GM12878 (cell line): ENCODE measurements at regions of chr20 and their contacts with region 1.

Region 1: DNA sequence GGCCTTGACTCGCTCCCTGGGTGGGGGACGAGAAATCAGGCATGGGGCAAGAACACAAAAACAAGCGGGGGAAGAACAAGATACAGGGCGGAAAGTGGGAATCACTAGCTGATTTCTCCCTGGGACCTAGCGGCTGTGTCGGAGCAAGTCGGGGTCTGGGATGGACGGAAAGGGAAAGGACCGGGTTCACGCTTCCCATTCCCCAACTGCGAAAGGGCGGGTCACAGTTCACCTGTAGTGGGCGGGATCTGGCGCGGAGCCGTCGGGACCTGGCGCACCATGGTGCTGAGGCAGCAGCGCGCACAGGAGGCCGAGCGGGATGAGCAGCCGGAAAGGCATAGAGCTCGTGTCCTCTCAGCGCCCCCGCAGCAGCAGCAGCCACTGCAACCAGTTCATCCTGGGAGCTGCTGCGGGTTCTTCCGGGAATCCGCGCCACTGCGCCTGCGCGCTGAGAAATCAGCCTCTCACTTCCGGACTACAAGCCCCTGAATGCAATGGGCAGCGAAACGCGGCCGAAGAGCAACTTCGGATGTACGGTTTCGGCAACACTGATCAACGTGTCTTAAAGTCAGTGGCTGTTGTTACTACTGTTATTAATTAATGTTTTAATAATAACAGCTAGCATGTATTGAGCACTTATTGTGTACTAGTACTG is at the start of gene EDEM2:
- DNase-seq: peak; percentile 88
- ATAC-seq: peak; percentile 91
- H3K4me3 ChIP-seq: peak within 1 kb of the TSS; percentile 88
- H3K27ac ChIP-seq: peak within 1 kb of the TSS; percentile 69
- H3K4me1 ChIP-seq: peaks cover 13% of the 10 kb centered on the region
- H3K27me3 ChIP-seq: no peaks in the 10 kb centered on the region
- CTCF ChIP-seq: no peak
- EP300 ChIP-seq: no peak
- POLR2A ChIP-seq: peak; percentile 91
- RAD21 ChIP-seq: no peak
- polyA plus RNA-seq, gene EDEM2: 9.9 to 11.4 TPM

Region 2: GRCh38 chr20:34834459-34834893 is 312.6 kb before region 1 on chr20:
- CTCF ChIA-PET with region 1: interaction called, 11 read pairs
- POLR2A ChIA-PET with region 1: no interaction called
- RAD21 ChIA-PET with region 1: interaction called, 5 read pairs
- SMC1A ChIA-PET with region 1: interaction called, 5 read pairs
- in situ Hi-C with region 1: no loop called
- intact Hi-C with region 1: no loop called
- DNase-seq: no peak
- ATAC-seq: peak; percentile 54
- H3K4me3 ChIP-seq: no peak overlapping the region
- H3K27ac ChIP-seq: no peak overlapping the region
- H3K4me1 ChIP-seq: no peaks in the 10 kb centered on the region
- H3K27me3 ChIP-seq: no peaks in the 10 kb centered on the region
- CTCF ChIP-seq: peak in 1 of 3 experiments; percentile 52; a peak in 2 of 6 replicates
- EP300 ChIP-seq: no peak
- POLR2A ChIP-seq: no peak
- RAD21 ChIP-seq: peak; percentile 46

Region 3: DNA sequence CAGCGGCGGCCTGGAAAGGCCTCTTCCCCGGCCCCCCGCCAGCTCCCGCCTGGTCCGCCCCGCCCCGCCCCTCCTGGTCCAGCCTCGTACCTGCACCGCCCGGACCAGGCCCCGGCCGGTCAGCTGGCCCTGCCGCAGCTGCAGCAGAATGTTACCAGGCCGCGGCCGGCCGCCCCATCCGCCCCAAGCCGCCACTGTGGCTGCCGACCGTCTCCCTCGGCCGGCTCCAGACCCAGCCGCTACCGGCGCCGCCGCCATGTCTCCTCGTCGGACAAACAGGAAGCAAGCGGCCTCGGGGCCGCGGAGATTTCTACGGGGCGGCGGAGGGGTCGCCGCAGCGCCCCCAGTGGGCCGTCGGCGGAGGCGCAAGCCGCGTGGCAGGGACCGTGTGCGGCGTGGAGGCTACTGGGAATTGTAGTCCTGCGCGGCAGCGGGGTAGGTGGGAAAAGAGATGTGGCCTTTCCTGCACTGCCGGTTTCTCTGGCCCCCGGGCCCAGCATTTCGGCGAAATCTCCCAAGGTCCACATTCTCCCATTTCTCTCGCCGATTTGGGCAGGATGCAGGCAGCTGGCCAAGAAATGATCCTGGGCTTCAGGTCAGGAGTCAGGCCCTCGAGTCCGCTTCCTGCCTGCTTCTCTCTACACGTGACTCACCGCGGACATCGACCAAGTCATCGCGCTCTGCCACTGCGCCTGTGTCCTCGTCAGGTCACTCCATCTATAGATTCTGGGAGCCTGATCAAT is 54.4 kb before region 1 on chr20 and contains the start of gene TRPC4AP:
- CTCF ChIA-PET with region 1: interaction called, 65 read pairs
- POLR2A ChIA-PET with region 1: interaction called, 3 read pairs
- RAD21 ChIA-PET with region 1: interaction called, 18 read pairs
- SMC1A ChIA-PET with region 1: interaction called, 13 read pairs
- in situ Hi-C with region 1: no loop called
- intact Hi-C with region 1: no loop called
- DNase-seq: peak; percentile 57
- ATAC-seq: peak; percentile 95
- H3K4me3 ChIP-seq: peak within 1 kb of the TSS; percentile 82
- H3K27ac ChIP-seq: peak within 1 kb of the TSS; percentile 69
- H3K4me1 ChIP-seq: peaks cover 15% of the 10 kb centered on the region
- H3K27me3 ChIP-seq: no peaks in the 10 kb centered on the region
- CTCF ChIP-seq: peak; percentile 90 to 99 (median 98); a peak in 5 of 6 replicates
- EP300 ChIP-seq: peak in 1 of 2 experiments; percentile 26; a peak in 1 of 4 replicates
- POLR2A ChIP-seq: peak; percentile 96
- RAD21 ChIP-seq: peak; percentile 64
- polyA plus RNA-seq, gene TRPC4AP: 1.1 to 2.2 TPM

Region 4: DNA sequence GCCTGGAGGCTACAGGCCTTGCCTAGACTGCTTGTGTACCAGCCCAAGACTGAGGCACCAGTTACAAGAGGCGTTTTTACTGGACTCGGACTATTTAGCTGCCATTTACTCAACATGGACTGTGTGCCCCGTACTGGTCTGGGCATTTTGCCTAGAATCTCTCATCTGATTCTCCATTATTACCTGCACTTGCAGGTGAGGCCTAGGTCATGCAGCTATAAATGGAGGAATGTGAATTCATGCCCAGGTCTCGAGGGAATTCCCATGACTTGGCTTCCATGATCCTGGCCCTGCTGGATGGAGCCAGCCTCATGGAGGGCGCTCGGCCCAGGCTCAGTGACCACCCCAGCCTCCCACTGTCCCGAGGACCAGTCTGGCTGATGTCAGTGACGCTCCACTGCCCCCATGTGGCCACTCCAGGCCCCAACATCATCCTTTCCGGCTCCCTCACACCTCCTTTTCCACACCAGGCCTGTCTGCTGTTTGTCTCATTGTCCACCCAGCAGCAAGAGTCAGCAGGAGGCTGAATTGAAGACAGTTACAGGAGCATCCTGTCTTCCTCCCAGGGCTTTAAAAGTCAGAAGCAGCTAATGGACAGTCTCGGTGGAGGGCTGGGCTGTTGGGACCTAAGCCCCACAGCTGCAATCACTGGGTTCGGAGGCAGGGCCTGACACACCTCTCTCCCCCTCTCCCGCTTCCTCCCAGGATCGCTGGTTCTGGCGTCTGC is 122.2 kb after region 1 on chr20:
- CTCF ChIA-PET with region 1: interaction called, 98 read pairs
- POLR2A ChIA-PET with region 1: no interaction called
- RAD21 ChIA-PET with region 1: interaction called, 14 read pairs
- SMC1A ChIA-PET with region 1: interaction called, 6 read pairs
- in situ Hi-C with region 1: loop called (anchors 5 kb)
- intact Hi-C with region 1: loop called (anchors 1 kb)
- DNase-seq: no peak
- ATAC-seq: peak; percentile 96
- H3K4me3 ChIP-seq: no peak overlapping the region
- H3K27ac ChIP-seq: no peak overlapping the region
- H3K4me1 ChIP-seq: no peaks in the 10 kb centered on the region
- H3K27me3 ChIP-seq: no peaks in the 10 kb centered on the region
- CTCF ChIP-seq: peak; percentile 78 to 83 (median 82)
- EP300 ChIP-seq: no peak
- POLR2A ChIP-seq: no peak
- RAD21 ChIP-seq: peak; percentile 76

Region 5: DNA sequence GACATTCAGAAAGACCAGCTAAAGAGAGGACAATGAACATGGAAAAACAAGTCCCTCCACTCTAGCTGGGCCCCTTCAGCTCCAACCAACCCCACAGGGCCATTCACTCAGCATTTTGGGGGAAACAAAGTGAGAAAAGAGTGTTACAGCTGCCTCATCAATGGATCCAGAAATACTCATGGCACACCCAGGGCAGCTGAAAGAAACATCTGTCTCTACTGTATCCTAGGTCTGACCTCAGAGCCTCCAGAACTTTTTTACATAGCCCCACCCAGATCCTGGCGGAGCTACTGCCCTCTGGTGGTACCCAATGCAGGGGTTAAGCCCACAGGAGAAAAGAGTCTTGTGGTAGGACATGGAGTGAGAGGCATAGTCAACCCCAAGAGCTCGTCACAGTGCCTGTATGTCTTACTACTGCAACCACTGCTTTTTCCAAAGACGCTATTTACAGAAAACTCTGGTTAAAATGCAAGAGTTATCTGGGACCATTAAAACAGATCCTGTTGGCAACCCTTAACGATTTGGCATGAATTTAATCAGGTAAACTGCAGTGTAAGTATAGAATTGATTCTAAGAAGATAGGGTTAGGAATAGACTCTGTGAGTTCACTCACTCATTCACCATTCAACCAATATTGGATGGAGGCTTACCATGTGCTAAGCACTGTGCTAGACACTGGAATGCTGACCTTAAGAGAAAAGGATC is 182.5 kb after region 1 on chr20:
- CTCF ChIA-PET with region 1: interaction called, 8 read pairs
- POLR2A ChIA-PET with region 1: no interaction called
- RAD21 ChIA-PET with region 1: no interaction called
- SMC1A ChIA-PET with region 1: no interaction called
- in situ Hi-C with region 1: no loop called
- intact Hi-C with region 1: loop called (anchors 1 kb)
- DNase-seq: no peak
- ATAC-seq: peak; percentile 94
- H3K4me3 ChIP-seq: no peak overlapping the region
- H3K27ac ChIP-seq: no peak overlapping the region
- H3K4me1 ChIP-seq: no peaks in the 10 kb centered on the region
- H3K27me3 ChIP-seq: no peaks in the 10 kb centered on the region
- CTCF ChIP-seq: peak; percentile 51 to 66 (median 64)
- EP300 ChIP-seq: no peak
- POLR2A ChIP-seq: no peak
- RAD21 ChIP-seq: peak; percentile 43; the same call in 1 of the 2 replicates